ENCODE measurements at regions of chr6 and their contacts with region 1.

Region 1: GRCh38 chr6:79570129-79571029 is 33.1 kb upstream of the LCA5 start:
- DNase-seq: peak; percentile 87
- H3K4me3 Mint-ChIP-seq: peak overlapping the region; percentile 37
- H3K27ac Mint-ChIP-seq: peak overlapping the region; percentile 98
- H3K4me1 Mint-ChIP-seq: peaks cover 70% of the 10 kb centered on the region
- H3K27me3 Mint-ChIP-seq: no peaks in the 10 kb centered on the region
- CTCF ChIP-seq: peak; percentile 53

Region 2: DNA sequence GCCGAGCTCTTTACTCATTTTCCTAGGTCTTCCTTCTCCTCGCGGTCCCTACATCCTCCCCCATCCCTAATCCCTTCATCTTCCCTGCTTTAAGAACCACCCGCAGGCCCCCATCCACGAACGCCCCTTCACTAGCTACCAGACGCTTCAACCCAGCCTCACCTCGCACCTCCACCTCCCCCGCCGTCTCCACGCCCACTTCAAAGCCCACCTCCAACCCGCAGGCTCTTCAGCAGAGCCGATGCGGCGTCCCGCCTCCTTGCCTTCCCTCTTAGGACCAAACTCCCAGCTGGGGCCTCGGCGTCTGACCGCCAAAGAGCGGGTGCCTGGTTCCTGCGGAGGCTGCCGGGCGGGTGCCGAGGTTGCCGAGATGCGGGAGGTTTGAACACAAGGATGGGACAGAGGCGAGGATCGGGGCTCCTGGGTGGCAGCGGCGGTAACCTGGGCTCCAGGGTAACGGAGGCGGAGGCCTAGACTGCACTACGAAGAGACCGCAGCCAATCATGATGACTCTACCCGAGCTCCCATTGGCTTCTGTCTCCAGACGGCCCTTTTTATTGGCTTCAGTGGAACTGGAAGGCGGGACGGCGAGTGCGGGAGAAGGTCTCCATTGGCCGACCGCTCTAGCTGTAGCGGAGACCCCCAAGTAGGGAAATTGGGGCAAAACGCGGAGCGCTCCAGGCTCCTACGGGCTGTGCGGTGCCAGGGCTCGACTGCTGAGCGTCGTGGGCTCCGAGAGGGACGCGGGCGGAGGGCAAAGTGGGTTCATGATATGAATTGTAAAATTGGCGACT is 33.2 kb before region 1 on chr6 and contains the start of gene LCA5:
- CTCF ChIA-PET with region 1: interaction called, 5 read pairs
- intact Hi-C with region 1: loop called (anchors 5 kb)
- DNase-seq: peak; percentile 92
- H3K4me3 Mint-ChIP-seq: no peak within 1 kb of the TSS
- H3K27ac Mint-ChIP-seq: no peak within 1 kb of the TSS
- H3K4me1 Mint-ChIP-seq: peaks cover 45% of the 10 kb centered on the region
- H3K27me3 Mint-ChIP-seq: no peaks in the 10 kb centered on the region
- CTCF ChIP-seq: no peak
- total RNA-seq, gene LCA5: 13.9 and 18.3 TPM in 2 replicates

Region 3: DNA sequence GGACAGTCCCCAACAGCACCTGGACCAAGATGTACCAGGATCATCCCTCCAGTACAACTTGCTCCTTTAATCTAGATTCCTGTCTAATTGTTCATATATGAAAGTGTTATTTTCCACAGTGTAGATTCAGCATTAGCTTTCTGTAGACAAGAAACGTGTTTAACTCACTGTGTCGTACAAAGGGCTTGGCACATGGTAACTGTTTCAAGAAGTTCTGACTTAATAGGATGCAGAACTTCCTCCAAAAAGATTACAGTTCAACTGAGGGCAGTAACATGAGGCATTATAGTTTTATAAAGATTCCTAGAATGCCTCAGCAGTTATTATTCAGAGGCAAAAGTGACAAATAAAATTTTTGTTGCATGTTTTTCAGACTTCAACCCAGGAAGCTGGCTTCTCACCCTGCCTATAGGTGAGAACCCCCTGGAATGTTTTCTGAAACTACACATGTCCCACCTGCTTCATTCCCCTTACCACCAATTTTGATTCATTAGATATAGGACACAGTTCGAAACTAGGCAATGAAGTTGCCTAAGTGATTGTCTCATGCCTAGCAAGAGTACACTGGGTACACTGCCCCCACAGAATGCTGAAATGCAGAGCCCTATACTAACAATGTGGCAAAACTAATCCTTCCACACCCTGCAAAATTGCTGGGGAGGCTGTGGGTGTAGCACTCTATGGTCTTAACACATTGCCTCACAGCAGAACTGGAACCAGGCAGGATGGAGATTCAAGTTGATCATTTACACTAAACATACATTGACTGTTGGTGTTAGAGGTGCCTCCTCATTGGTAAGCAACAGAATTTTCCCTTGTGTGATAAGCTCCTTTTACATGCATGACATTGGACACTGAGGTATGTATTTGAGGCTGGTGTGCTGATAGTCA is 38.2 kb after region 1 on chr6:
- CTCF ChIA-PET with region 1: no interaction called
- intact Hi-C with region 1: loop called (anchors 2 kb)
- DNase-seq: peak; percentile 75
- H3K4me3 Mint-ChIP-seq: no peak overlapping the region
- H3K27ac Mint-ChIP-seq: peak overlapping the region; percentile 56
- H3K4me1 Mint-ChIP-seq: peaks cover 76% of the 10 kb centered on the region
- H3K27me3 Mint-ChIP-seq: no peaks in the 10 kb centered on the region
- CTCF ChIP-seq: no peak

Region 4: GRCh38 chr6:79630883-79631692 is 60.7 kb after region 1 on chr6 and contains the start of gene SH3BGRL2:
- CTCF ChIA-PET with region 1: interaction called, 7 read pairs
- intact Hi-C with region 1: loop called (anchors 2 kb)
- DNase-seq: peak; percentile 84
- H3K4me3 Mint-ChIP-seq: peak within 1 kb of the TSS; percentile 95
- H3K27ac Mint-ChIP-seq: peak within 1 kb of the TSS; percentile 89
- H3K4me1 Mint-ChIP-seq: peaks cover 49% of the 10 kb centered on the region
- H3K27me3 Mint-ChIP-seq: no peaks in the 10 kb centered on the region
- CTCF ChIP-seq: no peak
- total RNA-seq, gene SH3BGRL2: 44.3 and 46.1 TPM in 2 replicates

Region 5: DNA sequence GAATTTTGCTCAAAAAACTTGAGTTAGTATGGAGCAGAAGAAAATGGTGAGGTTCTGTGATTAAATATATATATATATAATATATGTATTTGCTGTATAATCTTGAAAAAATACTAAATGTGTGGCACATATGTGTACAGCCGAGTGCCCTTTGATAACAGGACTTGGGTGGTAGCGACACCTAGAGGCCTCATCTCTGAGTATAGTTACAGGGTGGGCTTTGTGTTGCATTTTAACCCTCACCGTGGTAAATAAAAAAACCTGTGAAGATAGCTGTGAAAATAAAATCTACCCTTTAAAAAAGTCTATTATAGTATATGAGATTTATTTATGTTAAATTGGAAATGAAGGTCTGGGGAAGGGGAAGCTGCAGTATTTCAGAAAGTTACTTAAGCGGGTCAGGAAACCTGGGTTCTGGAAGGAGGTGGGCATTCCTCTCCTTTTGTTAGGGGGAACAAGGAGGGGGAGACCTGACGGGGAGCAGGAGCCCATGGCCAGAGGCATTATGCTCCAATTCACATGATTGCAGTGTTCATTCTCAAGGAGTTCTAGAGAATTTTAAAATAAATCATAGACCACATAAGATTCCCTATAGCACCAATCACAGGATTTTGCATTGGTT is 143.4 kb after region 1 on chr6:
- CTCF ChIA-PET with region 1: no interaction called
- intact Hi-C with region 1: loop called (anchors 2 kb)
- DNase-seq: peak; percentile 68
- H3K4me3 Mint-ChIP-seq: no peak overlapping the region
- H3K27ac Mint-ChIP-seq: no peak overlapping the region
- H3K4me1 Mint-ChIP-seq: peaks cover 16% of the 10 kb centered on the region
- H3K27me3 Mint-ChIP-seq: no peaks in the 10 kb centered on the region
- CTCF ChIP-seq: no peak

Measured in Calu3 (cell line).